Caco-2 (cell line): ENCODE measurements at regions of chr3 and their contacts with region 1.

Region 1: DNA sequence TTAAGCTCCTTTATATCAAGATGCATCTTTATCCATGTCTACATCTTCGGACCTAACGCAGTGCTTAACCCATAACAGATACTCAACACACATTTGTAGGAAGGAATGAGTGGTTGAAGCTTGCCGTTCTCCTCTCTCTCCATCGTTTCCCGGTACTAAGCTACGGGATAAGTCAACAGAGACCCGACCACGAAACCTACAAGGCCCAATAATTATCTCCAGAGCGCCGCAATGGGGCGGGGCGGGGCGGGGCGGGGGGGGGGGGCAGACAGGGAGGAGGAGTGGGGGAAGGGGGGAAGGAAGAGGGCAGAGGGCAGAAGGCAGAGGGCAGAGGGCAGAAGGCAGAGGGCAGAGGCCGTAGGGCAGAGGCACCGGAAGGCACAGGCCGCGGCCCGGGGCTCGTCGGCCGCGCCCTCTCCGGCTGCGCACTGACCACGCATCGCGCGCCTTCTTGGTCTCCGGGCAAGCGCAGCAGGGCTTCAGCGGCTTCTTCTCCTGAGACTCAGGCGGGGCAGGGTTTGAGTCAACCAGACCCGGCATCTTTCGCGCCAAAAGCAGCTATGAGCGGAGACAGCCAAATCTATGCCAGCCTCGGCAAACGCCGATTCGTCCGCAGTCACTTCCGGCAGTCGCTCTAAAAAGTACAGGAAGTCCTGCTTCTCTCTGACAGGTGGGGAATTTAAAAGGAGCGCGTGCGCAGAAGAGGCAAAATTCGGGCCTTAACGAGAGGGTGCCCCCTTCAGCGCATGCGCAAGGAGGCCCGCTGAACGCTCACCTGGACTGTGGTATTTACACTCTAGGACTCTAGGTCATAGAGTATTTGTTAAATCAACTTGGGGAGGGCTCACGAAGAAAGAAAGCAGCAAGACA is at the start of gene COX17:
- DNase-seq: peak; percentile 96 to 97
- H3K4me3 ChIP-seq: peak within 1 kb of the TSS; percentile 67
- H3K4me3 Mint-ChIP-seq: peak within 1 kb of the TSS; percentile 84
- H3K27ac Mint-ChIP-seq: peak within 1 kb of the TSS; percentile 90
- H3K4me1 ChIP-seq: peaks cover 13% of the 10 kb centered on the region
- H3K4me1 Mint-ChIP-seq: peaks cover 6% of the 10 kb centered on the region
- H3K27me3 ChIP-seq: no peaks in the 10 kb centered on the region
- H3K27me3 Mint-ChIP-seq: no peaks in the 10 kb centered on the region
- CTCF ChIP-seq: no peak
- total RNA-seq, gene COX17: 43.6 and 44.9 TPM in 2 replicates

Region 2: DNA sequence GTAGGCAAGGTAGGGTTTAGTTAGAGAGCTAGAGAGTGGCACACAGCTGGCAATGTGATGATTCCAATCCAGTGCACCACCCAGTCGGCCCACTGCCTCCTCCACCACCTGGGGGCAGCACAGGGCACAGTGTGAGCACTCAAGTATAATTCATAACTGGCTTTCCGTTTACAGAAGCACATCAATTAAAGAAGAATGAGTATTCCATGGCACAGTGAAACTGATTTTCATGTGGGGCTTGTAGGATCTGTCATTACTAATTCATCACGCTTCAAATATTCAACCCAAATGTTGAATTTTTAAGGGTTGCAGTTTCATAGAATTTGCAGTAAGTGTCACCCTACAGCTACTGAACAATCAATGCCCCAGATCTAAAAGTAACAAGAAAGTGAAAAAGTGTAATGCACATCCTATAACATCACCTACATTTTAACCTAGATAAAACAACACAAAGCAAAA is 792.2 kb before region 1 on chr3:
- CTCF ChIA-PET with region 1: no interaction called
- POLR2A ChIA-PET with region 1: no interaction called
- intact Hi-C with region 1: loop called (anchors 5 kb)
- DNase-seq: peak; percentile 57 to 73
- H3K4me3 ChIP-seq: no peak overlapping the region
- H3K4me3 Mint-ChIP-seq: no peak overlapping the region
- H3K27ac Mint-ChIP-seq: no peak overlapping the region
- H3K4me1 ChIP-seq: no peaks in the 10 kb centered on the region
- H3K4me1 Mint-ChIP-seq: no peaks in the 10 kb centered on the region
- H3K27me3 ChIP-seq: no peaks in the 10 kb centered on the region; the same call in 1 of the 2 replicates
- H3K27me3 Mint-ChIP-seq: peaks cover 22% of the 10 kb centered on the region
- CTCF ChIP-seq: peak; percentile 87 to 93

Region 3: DNA sequence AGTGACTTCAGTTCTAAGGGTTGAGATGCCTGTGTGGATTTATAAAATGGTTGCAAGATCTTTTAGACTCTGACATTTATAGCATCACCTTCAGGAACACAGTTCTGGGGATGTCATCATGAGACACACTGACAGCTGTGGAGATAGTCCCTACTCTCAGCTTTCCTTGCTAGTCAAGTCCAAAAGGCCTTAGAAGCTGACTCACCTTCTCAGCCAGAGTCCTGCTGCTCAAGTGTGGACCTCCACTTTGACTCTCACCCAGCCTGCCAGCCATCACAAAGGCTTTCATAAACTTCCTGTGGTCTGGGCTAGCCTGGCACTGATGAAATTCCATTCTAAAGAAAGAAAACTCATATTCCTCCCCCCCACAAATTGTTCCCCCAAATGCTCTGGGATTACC is 258.4 kb before region 1 on chr3:
- CTCF ChIA-PET with region 1: no interaction called
- POLR2A ChIA-PET with region 1: no interaction called
- intact Hi-C with region 1: loop called (anchors 10 kb)
- DNase-seq: no peak
- H3K4me3 ChIP-seq: no peak overlapping the region
- H3K4me3 Mint-ChIP-seq: no peak overlapping the region
- H3K27ac Mint-ChIP-seq: no peak overlapping the region
- H3K4me1 ChIP-seq: peaks cover 26% of the 10 kb centered on the region
- H3K4me1 Mint-ChIP-seq: peaks cover 19% of the 10 kb centered on the region
- H3K27me3 ChIP-seq: no peaks in the 10 kb centered on the region
- H3K27me3 Mint-ChIP-seq: no peaks in the 10 kb centered on the region
- CTCF ChIP-seq: no peak

Region 4: DNA sequence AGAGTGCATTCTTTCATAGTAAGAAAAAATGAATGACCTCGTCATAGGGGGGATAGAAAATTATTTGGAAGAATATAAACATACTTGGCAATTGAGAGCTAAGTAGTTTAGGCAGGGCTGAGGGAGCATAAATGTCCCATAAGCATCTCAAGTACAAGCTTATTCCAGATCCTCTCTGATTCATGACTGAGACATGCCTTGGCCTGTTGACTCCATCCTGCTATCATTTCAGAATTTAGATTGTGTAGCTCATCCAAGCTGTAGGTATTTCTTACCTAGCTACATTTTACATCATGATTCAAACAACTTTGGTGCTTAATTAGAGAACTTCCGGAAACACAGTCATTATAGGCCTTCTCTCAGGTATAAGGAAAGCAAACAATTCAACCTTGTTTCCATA is 195.9 kb before region 1 on chr3:
- CTCF ChIA-PET with region 1: no interaction called
- POLR2A ChIA-PET with region 1: no interaction called
- intact Hi-C with region 1: no loop called
- DNase-seq: no peak
- H3K4me3 ChIP-seq: no peak overlapping the region
- H3K4me3 Mint-ChIP-seq: no peak overlapping the region
- H3K27ac Mint-ChIP-seq: no peak overlapping the region
- H3K4me1 ChIP-seq: no peaks in the 10 kb centered on the region
- H3K4me1 Mint-ChIP-seq: no peaks in the 10 kb centered on the region
- H3K27me3 ChIP-seq: no peaks in the 10 kb centered on the region
- H3K27me3 Mint-ChIP-seq: no peaks in the 10 kb centered on the region
- CTCF ChIP-seq: no peak

Region 5: DNA sequence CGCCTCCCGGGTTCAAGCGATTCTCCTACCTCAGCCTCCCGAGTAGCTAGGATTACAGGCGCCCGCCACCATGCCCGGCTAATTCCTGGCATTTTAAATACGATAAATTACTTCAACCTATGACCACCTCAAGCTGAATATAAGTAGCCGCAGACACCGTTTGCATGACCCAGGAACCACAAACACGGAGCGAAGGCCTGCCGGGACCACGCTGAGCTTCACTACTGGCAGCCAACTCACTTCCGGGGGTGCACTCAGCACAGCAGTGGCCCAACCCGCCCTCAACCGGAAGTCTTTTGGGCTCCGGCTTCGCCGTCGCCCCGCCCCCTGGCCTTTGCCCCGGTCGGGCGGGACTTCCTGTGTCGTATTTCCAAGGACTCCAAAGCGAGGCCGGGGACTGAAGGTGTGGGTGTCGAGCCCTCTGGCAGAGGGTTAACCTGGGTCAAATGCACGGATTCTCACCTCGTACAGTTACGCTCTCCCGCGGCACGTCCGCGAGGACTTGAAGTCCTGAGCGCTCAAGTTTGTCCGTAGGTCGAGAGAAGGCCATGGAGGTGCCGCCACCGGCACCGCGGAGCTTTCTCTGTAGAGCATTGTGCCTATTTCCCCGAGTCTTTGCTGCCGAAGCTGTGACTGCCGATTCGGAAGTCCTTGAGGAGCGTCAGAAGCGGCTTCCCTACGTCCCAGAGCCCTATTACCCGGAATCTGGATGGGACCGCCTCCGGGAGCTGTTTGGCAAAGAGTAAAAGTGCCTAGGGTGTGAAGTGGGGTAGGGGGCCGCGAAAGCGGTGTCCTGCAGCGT is 178.6 kb before region 1 on chr3 and contains the start of gene TIMMDC1:
- CTCF ChIA-PET with region 1: no interaction called
- POLR2A ChIA-PET with region 1: interaction called, 6 read pairs
- intact Hi-C with region 1: loop called (anchors 1 kb)
- DNase-seq: peak; percentile 96 to 97
- H3K4me3 ChIP-seq: peak within 1 kb of the TSS; percentile 42
- H3K4me3 Mint-ChIP-seq: peak within 1 kb of the TSS; percentile 99
- H3K27ac Mint-ChIP-seq: peak within 1 kb of the TSS; percentile 98
- H3K4me1 ChIP-seq: 0 out of 2 replicates have a peak, but pooled peaks cover 7% of the 10 kb centered on the region
- H3K4me1 Mint-ChIP-seq: peaks cover 12% of the 10 kb centered on the region
- H3K27me3 ChIP-seq: no peaks in the 10 kb centered on the region
- H3K27me3 Mint-ChIP-seq: no peaks in the 10 kb centered on the region
- CTCF ChIP-seq: no peak
- total RNA-seq, gene TIMMDC1: 64.5 and 66.7 TPM in 2 replicates

Region 6: DNA sequence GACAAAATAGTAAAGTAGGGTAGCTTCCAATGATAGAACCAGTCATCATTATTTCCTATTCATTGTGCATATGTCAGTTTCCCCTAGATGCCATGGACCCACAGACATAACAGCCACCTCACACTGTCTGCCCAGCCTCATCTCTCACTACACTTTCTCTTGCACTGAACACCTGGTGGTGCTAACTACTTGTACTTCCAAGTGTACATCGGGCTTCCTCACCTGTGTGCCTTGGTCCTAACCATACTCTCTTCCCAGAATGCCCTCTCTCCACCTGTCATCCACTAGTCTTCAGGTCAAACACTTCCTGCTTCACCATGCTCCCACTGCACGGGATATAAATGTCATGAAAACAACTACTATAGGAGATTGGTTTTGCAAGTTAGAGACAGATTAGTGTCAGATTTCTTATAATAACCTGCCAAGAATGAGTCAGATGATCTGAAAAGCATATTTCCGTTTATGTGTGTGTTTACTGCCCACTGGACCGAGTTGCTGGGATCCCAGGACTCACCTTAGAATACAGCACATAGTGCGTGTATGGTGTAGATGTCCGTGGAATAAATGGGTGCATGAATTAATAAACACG is 58.0 kb before region 1 on chr3:
- CTCF ChIA-PET with region 1: interaction called, 3 read pairs
- POLR2A ChIA-PET with region 1: no interaction called
- intact Hi-C with region 1: loop called (anchors 5 kb)
- DNase-seq: no peak
- H3K4me3 ChIP-seq: no peak overlapping the region
- H3K4me3 Mint-ChIP-seq: no peak overlapping the region
- H3K27ac Mint-ChIP-seq: no peak overlapping the region
- H3K4me1 ChIP-seq: no peaks in the 10 kb centered on the region
- H3K4me1 Mint-ChIP-seq: no peaks in the 10 kb centered on the region
- H3K27me3 ChIP-seq: no peaks in the 10 kb centered on the region
- H3K27me3 Mint-ChIP-seq: peaks cover 4% of the 10 kb centered on the region
- CTCF ChIP-seq: no peak

Region 7: DNA sequence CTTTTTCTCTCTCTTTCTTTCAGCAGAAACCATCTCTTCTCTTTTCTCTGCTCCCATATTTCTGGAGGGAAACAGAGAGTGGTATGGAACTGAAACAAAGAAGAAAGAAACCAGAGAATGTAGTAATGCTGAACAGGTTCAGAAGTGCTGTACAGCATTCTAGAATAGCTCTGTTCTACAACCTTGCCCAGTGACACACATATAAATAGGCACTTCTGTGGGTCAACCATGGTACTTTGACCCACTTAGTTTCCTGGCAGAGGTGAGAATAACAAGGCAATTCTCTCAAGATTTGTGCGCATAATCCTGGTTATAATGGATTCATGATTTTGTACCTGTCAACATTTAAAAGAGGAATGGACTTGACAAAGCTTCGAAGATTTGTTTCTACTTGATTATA is 38.1 kb after region 1 on chr3:
- CTCF ChIA-PET with region 1: no interaction called
- POLR2A ChIA-PET with region 1: no interaction called
- intact Hi-C with region 1: no loop called
- DNase-seq: no peak
- H3K4me3 ChIP-seq: no peak overlapping the region
- H3K4me3 Mint-ChIP-seq: no peak overlapping the region
- H3K27ac Mint-ChIP-seq: no peak overlapping the region
- H3K4me1 ChIP-seq: no peaks in the 10 kb centered on the region
- H3K4me1 Mint-ChIP-seq: peaks cover 6% of the 10 kb centered on the region
- H3K27me3 ChIP-seq: no peaks in the 10 kb centered on the region
- H3K27me3 Mint-ChIP-seq: no peaks in the 10 kb centered on the region
- CTCF ChIP-seq: no peak